ENCODE measurements at regions of chr11 and their contacts with region 1.

Region 1: DNA sequence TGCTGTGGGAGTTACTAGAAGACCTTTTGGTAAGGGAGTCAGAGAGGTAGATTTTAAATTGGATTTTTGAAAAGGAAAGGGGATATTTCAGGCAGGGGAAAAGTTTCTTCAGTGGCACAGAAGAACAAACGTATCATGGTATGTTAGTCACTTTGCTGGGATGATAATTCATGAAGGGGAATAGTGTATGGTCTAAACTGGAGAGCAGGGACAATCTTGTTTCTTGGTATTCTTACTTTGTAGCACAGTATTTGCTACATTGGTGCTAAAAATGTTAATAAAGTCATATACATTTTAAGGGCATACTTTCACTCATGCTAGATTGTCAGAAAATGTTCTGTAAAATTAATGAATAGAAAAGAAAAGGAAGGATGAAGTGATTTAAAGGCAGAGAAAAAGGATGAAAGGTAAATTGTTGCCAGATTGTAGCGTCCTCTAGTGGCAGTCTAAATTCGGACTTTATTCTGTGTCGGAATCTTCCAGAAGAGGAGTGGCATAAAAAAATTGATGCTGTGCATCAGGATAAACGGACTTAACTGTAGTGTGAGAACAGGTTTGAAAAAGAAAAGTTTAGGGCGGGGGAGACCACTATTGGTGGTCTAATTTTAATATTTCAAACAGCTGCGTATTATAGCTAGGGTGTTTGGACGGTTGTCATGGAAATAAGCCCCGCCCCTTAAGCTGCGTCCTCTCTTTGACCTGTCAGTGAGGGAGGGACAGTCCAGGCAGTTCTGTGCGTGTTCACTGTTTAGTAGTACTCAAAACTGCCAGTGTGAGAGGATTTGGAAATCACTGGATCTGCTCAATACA is at the start of gene BCO2:
- DNase-seq: peak; percentile 44 to 94 (median 78)

Region 2: GRCh38 chr11:112050721-112051120 is 124.3 kb before region 1 on chr11:
- intact Hi-C with region 1: no loop called
- DNase-seq: no peak

Region 3: GRCh38 chr11:112113539-112114457 is 61.2 kb before region 1 on chr11:
- intact Hi-C with region 1: loop called (anchors 2 kb)
- DNase-seq: no peak